Naive thymus-derived CD8-positive, alpha-beta T cell (primary cell): ENCODE measurements at regions of chr2 and their contacts with region 1.

Region 1: GRCh38 chr2:218357236-218358159 is 841 bp downstream of the CATIP start:
- DNase-seq: peak in 1 of 10 donors; percentile 53
- ATAC-seq: no peak
- H3K4me3 Mint-ChIP-seq: no peak overlapping the region
- H3K27ac Mint-ChIP-seq: peak overlapping the region in 3 of 10 donors; percentile 22 to 63 (median 37)
- H3K4me1 Mint-ChIP-seq: peaks cover 3 to 8% (median 5%) of the 10 kb centered on the region in 4 donors
- H3K27me3 Mint-ChIP-seq: no peaks in the 10 kb centered on the region

Region 2: DNA sequence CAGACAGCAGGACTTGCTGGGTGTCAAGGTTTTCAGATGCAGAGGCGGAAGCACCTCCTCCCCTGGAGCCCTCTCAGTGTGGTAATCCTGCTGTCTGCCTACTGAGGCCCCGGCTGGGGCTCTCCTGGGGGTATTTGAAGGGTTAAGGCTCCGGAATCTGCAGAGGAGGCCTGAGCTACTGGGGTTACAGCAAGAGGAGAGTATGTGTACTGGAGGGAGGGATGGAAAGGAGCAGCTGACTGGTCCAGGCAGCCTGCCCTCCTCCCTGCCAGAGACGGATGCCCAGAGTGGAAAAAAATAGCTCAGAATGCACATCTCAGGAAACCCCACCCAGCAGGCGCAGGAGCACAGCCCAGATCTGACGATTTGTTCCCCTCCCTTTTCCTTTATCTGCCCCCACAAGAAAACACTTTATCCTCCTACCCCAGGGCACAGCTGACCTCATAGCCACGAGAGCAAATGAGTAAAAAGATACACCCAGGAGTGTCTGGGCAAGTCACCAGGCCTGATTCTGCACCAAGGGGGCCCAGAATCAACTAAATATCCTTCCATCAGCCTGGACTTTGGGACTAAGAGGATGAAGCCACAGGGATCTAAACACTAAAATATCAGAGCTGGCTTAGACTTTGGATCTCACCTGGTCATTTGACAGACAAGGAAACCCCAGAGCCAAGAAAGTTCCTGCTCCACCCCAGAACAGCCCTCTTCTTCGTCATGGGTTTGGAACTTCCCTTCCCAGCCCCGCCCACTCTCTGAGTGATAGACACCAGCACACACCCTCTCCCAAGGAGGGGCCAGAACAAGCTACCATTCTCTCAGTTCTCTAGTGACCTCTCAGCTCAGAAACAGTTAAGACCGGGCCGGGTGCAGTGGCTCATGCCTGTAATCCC is 70.7 kb before region 1 on chr2:
- POLR2A ChIA-PET with region 1: interaction called, 10 read pairs
- DNase-seq: peak; percentile 59 to 87 (median 79)
- ATAC-seq: peak; percentile 72 to 73
- H3K4me3 Mint-ChIP-seq: peak overlapping the region; percentile 90 to 99 (median 94)
- H3K27ac Mint-ChIP-seq: peak overlapping the region; percentile 97 to 100 (median 98)
- H3K4me1 Mint-ChIP-seq: peaks cover 49 to 94% (median 88%) of the 10 kb centered on the region in 4 donors
- H3K27me3 Mint-ChIP-seq: no peaks in the 10 kb centered on the region

Region 3: DNA sequence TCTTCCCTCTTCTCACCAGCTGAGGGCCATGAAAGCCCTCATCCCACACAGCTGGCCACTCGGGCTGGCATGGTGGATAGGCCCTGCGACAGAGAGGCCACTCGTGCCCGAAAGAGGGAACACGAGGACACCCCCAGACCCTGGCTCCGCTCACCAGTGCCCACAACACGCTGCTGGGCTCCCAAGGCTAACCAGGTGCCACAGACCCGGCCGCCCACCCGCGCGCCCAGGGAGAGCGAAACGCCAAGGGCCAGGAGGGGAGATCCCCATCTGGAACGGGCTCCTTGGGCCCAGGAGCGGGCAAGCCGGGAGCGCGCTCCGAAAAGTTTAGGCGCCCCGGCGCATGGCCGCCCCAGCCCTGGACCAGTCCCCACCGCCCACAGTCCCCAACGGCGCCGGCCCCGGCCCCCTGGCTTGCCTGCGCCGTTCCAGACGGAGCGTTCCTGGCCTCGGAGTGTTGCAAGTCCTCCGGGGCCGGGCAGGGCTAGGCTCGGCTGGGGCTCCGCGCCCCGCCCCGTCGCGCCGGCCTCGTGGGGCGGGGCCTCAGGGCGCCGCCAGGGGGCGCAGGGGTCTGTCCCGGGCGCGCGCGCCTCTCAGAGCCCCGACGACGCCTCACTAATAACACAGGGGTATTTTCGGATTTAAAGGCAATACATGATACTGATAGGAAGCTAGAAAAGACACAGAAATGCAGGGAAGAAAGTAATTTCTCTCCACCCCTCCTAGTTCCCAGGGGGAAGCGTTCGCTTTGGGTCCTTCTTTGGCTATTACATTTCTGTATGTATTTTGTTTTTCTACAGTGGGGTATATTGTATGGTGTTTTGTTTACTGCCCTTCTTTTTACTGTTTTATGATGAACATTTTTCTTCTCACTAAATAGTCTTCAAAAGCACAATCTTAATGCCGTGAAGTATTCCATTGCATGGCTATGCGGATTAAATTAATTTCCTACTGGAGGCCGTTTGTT is 65.2 kb before region 1 on chr2 and contains the start of gene TMBIM1:
- POLR2A ChIA-PET with region 1: interaction called, 27 read pairs
- DNase-seq: peak; percentile 66 to 90 (median 82)
- ATAC-seq: peak; percentile 79 to 86
- H3K4me3 Mint-ChIP-seq: peak within 1 kb of the TSS; percentile 87 to 99 (median 96)
- H3K27ac Mint-ChIP-seq: peak within 1 kb of the TSS; percentile 97 to 99 (median 98)
- H3K4me1 Mint-ChIP-seq: peaks cover 27 to 64% (median 59%) of the 10 kb centered on the region in 4 donors
- H3K27me3 Mint-ChIP-seq: no peaks in the 10 kb centered on the region
- polyA plus RNA-seq, gene TMBIM1: 75.8 to 114 (median 80.3) TPM

Region 4: DNA sequence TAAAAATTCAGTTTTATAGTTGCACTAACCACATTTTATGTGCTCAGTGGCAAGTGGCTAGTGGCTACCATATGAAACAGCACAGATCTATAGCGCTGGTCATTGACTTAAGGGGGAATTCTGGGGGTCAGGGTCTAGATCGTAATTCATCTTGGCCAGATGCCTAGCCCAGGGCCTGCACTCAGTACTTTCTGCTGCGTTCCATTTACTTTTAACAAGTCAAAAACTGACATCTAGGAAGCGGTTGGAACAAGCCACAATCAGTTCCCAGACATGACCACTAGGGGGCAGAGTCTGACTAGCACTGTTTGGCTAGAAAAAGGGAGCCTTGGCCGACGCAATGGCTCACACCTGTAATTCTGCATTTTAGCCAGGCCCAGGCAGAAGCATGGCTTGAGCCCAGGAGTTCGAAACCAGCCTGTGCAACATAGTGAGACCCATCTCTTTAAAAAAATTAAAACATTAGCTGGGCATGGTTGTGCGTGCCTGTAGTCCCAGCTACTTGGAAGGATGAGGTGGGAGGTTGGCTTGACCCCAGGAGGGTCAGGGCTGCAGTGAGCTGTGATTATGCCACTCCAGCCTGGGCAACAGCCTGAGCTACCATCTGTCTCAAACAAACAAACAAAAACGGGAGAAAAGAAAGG is 56.2 kb before region 1 on chr2:
- POLR2A ChIA-PET with region 1: interaction called, 27 read pairs
- DNase-seq: peak; percentile 65 to 93 (median 86)
- ATAC-seq: peak; percentile 92 to 99
- H3K4me3 Mint-ChIP-seq: no peak overlapping the region
- H3K27ac Mint-ChIP-seq: peak overlapping the region in 9 of 10 donors; percentile 2 to 92 (median 66)
- H3K4me1 Mint-ChIP-seq: peaks cover 6 to 11% (median 7%) of the 10 kb centered on the region in 4 donors
- H3K27me3 Mint-ChIP-seq: no peaks in the 10 kb centered on the region